ENCODE measurements at regions of chr12 and their contacts with region 1.

Region 1: DNA sequence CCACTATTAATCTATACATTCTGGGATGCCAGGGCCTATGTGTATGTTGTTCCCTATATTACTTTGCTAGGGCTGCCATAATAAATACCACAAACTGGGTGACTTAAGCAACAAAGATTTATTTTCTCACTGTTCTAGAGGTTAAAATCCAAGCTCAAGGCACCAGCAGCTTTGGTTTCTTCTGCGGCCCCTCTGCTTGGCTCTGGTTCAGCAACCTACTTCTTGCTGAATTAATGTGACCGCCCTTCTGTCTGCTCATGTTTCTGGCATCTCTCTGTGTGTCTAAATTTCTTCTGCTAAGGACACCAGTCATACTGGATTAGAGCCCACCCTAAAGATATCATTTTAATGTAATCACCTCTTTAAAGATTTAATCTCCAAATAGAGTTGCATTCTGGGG is 84.7 kb downstream of the ZNF664 start:
- DNase-seq: no peak
- H3K4me3 ChIP-seq: no peak overlapping the region
- H3K27ac ChIP-seq: no peak overlapping the region
- H3K4me1 ChIP-seq: peaks cover 6% of the 10 kb centered on the region
- H3K27me3 ChIP-seq: peaks cover 8% of the 10 kb centered on the region
- CTCF ChIP-seq: no peak

Region 2: DNA sequence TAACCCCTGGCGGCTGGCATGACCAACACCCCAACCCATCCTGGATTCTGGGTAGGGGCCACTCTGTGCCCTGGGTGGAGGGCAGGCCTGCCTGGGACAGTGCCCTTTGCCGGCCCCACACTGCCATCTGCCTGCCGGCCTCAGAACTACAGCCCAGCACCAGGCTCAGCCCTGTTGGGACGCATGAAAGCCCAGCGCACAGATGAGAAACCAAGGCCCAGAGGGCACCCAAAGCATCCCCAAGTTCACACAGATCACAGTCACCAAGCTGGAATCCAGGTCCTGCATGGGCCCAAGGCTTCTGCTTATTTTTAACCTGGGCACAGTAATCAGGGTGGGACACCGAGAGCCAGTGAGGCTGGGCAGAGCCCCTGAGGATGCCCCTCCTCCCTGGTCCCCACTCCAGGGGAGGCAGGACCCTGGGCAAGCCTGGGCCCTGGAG is 263.4 kb after region 1 on chr12:
- intact Hi-C with region 1: loop called (anchors 5 kb)
- DNase-seq: peak; percentile 68
- H3K4me3 ChIP-seq: no peak overlapping the region
- H3K27ac ChIP-seq: no peak overlapping the region
- H3K4me1 ChIP-seq: peaks cover 3% of the 10 kb centered on the region
- H3K27me3 ChIP-seq: no peaks in the 10 kb centered on the region
- CTCF ChIP-seq: peak; percentile 96